ENCODE measurements at regions of chr20 and their contacts with region 1.

Region 1: GRCh38 chr20:4937397-4938319 is 63.7 kb downstream of the SLC23A2 start:
- DNase-seq: no peak
- H3K4me3 ChIP-seq: no peak overlapping the region
- H3K27ac ChIP-seq: no peak overlapping the region
- H3K4me1 ChIP-seq: peaks cover 3% of the 10 kb centered on the region; the same call in 1 of the 2 replicates
- H3K27me3 ChIP-seq: no peaks in the 10 kb centered on the region
- CTCF ChIP-seq: no peak

Region 2: GRCh38 chr20:4413314-4414049 is 524.2 kb before region 1 on chr20:
- CTCF ChIA-PET with region 1: no interaction called
- POLR2A ChIA-PET with region 1: no interaction called
- intact Hi-C with region 1: no loop called
- DNase-seq: no peak
- H3K4me3 ChIP-seq: no peak overlapping the region
- H3K27ac ChIP-seq: no peak overlapping the region
- H3K4me1 ChIP-seq: no peaks in the 10 kb centered on the region
- H3K27me3 ChIP-seq: no peaks in the 10 kb centered on the region
- CTCF ChIP-seq: no peak

Region 3: GRCh38 chr20:4862661-4863060 is 75.0 kb before region 1 on chr20:
- CTCF ChIA-PET with region 1: no interaction called
- POLR2A ChIA-PET with region 1: interaction called, 31 read pairs
- intact Hi-C with region 1: no loop called
- DNase-seq: no peak
- H3K4me3 ChIP-seq: no peak overlapping the region
- H3K27ac ChIP-seq: no peak overlapping the region
- H3K4me1 ChIP-seq: peaks cover 7% of the 10 kb centered on the region
- H3K27me3 ChIP-seq: no peaks in the 10 kb centered on the region
- CTCF ChIP-seq: no peak

Region 4: GRCh38 chr20:4916971-4917881 is 20.4 kb before region 1 on chr20:
- CTCF ChIA-PET with region 1: no interaction called
- POLR2A ChIA-PET with region 1: interaction called, 17 read pairs
- intact Hi-C with region 1: no loop called
- DNase-seq: peak; percentile 50 to 82
- H3K4me3 ChIP-seq: no peak overlapping the region
- H3K27ac ChIP-seq: no peak overlapping the region
- H3K4me1 ChIP-seq: peaks cover 14% of the 10 kb centered on the region
- H3K27me3 ChIP-seq: no peaks in the 10 kb centered on the region
- CTCF ChIP-seq: no peak

Region 5: GRCh38 chr20:5001174-5002076 is 63.8 kb after region 1 on chr20 and contains the start of gene SLC23A2:
- CTCF ChIA-PET with region 1: no interaction called
- POLR2A ChIA-PET with region 1: interaction called, 18 read pairs
- intact Hi-C with region 1: no loop called
- DNase-seq: peak; percentile 45 to 60
- H3K4me3 ChIP-seq: peak within 1 kb of the TSS; percentile 93
- H3K27ac ChIP-seq: peak within 1 kb of the TSS; percentile 45
- H3K4me1 ChIP-seq: peaks cover 19% of the 10 kb centered on the region
- H3K27me3 ChIP-seq: no peaks in the 10 kb centered on the region
- CTCF ChIP-seq: no peak
- total RNA-seq, gene SLC23A2: 20.4 and 22.3 TPM in 2 replicates

Region 6: DNA sequence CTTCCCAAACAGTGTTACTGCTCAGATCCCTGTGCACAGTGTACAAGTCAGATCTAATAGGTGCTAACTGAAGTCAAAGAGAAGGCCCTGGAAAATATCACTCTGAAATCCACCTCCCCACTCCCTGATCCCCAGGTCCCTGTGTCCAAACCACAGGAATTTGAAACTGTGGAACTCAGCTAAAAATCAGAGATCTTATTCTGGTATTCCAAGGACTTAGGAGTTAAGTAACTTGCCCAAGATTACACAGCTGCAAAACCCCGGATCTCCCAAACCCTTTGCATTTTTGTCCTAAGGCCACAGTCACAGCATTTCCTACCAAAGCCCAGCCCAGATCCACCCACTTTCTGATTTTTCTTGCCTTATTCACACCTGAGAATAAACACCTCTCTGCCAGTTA is 95.9 kb after region 1 on chr20:
- CTCF ChIA-PET with region 1: no interaction called
- POLR2A ChIA-PET with region 1: interaction called, 23 read pairs
- intact Hi-C with region 1: no loop called
- DNase-seq: peak; percentile 13 to 87
- H3K4me3 ChIP-seq: no peak overlapping the region
- H3K27ac ChIP-seq: peak overlapping the region; percentile 87
- H3K4me1 ChIP-seq: peaks cover 53% of the 10 kb centered on the region
- H3K27me3 ChIP-seq: no peaks in the 10 kb centered on the region
- CTCF ChIP-seq: no peak

Region 7: GRCh38 chr20:5046656-5047339 is 109.1 kb after region 1 on chr20:
- CTCF ChIA-PET with region 1: no interaction called
- POLR2A ChIA-PET with region 1: no interaction called
- intact Hi-C with region 1: no loop called
- DNase-seq: no peak
- H3K4me3 ChIP-seq: no peak overlapping the region
- H3K27ac ChIP-seq: no peak overlapping the region
- H3K4me1 ChIP-seq: no peaks in the 10 kb centered on the region
- H3K27me3 ChIP-seq: no peaks in the 10 kb centered on the region
- CTCF ChIP-seq: no peak

Region 8: GRCh38 chr20:5205348-5206210 is 267.9 kb after region 1 on chr20:
- CTCF ChIA-PET with region 1: no interaction called
- POLR2A ChIA-PET with region 1: no interaction called
- intact Hi-C with region 1: no loop called
- DNase-seq: peak; percentile 46 to 68
- H3K4me3 ChIP-seq: no peak overlapping the region
- H3K27ac ChIP-seq: no peak overlapping the region
- H3K4me1 ChIP-seq: no peaks in the 10 kb centered on the region
- H3K27me3 ChIP-seq: no peaks in the 10 kb centered on the region
- CTCF ChIP-seq: peak; percentile 89